ENCODE measurements at regions of chr13 and their contacts with region 1.

Region 1: GRCh38 chr13:53782488-53782961 is 753.9 kb downstream of the OLFM4 start:
- DNase-seq: peak in 1 of 2 donors; percentile 7
- ATAC-seq: peak; percentile 29

Region 2: GRCh38 chr13:53241960-53242359 is 540.6 kb before region 1 on chr13:
- intact Hi-C with region 1: loop called in 1 of 2 experiments (anchors 10 kb)
- DNase-seq: no peak
- ATAC-seq: no peak